ENCODE measurements at regions of chr19 and their contacts with region 1.

Region 1: GRCh38 chr19:9847087-9847671 is 12.1 kb downstream of the PIN1 start:
- DNase-seq: peak; percentile 90
- H3K4me3 ChIP-seq: no peak overlapping the region
- H3K27ac ChIP-seq: peak overlapping the region; percentile 82
- H3K27me3 ChIP-seq: no peaks in the 10 kb centered on the region
- CTCF ChIP-seq: peak; percentile 89

Region 2: DNA sequence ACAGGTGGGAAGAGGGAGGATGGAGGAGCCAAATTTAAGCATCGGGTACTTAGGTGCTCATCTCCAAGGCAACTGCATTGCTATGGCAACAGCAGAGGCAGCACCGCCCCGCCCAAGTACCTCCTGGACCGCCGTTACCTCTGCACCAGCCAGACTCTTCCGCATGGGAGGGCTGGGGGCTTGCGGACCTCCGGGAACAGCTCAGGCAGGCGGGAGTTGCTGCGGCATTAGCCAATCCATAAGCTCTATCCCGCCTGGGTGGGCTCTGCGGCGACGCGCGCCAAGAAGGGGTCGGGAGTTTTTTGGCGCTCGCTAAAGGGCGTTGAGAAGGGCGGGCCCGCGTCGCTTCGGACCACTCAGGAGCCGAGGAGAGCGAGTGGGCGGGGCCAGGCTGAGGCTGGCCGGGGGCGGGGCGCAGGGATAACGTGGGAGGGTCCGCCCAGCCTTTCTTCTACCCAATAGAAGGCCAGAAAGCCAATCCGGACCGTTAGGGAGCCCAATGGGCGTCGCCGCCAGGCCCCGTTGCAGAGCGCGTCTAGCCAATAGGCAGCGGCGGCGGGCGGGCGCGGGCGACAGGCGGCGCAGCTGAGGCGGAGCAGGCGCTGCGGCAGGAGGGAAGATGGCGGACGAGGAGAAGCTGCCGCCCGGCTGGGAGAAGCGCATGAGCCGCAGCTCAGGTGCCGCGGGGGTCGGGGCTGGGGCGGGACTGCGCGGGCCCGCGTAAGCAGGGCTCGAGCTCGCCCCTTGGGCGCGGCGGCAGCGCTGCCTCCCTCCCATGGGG is 12.3 kb before region 1 on chr19 and contains the start of gene PIN1:
- CTCF ChIA-PET with region 1: interaction called, 13 read pairs
- POLR2A ChIA-PET with region 1: no interaction called
- DNase-seq: peak; percentile 94
- H3K4me3 ChIP-seq: peak within 1 kb of the TSS; percentile 87
- H3K27ac ChIP-seq: peak within 1 kb of the TSS; percentile 31
- H3K27me3 ChIP-seq: no peaks in the 10 kb centered on the region
- CTCF ChIP-seq: peak; percentile 52
- polyA plus RNA-seq, gene PIN1: 33.6 and 42.7 TPM in 2 replicates

Measured in AG04450 (cell line).